AG04450 (cell line): ENCODE measurements at regions of chr9 and their contacts with region 1.

Region 1: DNA sequence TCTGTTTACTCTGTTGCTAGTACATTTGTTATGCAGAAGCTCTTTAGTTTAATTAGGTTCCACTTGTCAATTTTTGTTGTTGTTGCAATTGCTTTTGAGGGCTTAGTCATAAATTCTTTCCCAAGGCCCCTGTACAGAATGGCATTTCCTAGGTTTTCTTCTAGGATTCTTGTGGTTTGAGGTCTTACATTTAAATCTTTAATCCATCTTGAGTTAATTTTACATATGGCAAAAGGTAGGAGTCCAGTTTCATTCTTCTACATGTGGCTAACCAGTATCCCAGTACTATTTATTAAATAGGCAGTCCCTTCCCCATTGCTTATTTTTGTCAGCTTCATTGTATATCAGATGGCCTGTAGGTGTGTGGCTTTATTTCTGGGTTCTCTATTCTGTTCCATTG is 792.4 kb downstream of the PTPRD start:
- DNase-seq: no peak
- H3K4me3 ChIP-seq: no peak overlapping the region
- H3K27ac ChIP-seq: no peak overlapping the region
- H3K27me3 ChIP-seq: no peaks in the 10 kb centered on the region
- CTCF ChIP-seq: no peak

Region 2: GRCh38 chr9:9799287-9799686 is 21.1 kb before region 1 on chr9:
- CTCF ChIA-PET with region 1: interaction called, 10 read pairs
- POLR2A ChIA-PET with region 1: no interaction called
- DNase-seq: no peak
- H3K4me3 ChIP-seq: no peak overlapping the region
- H3K27ac ChIP-seq: no peak overlapping the region
- H3K27me3 ChIP-seq: no peaks in the 10 kb centered on the region
- CTCF ChIP-seq: no peak

Region 3: DNA sequence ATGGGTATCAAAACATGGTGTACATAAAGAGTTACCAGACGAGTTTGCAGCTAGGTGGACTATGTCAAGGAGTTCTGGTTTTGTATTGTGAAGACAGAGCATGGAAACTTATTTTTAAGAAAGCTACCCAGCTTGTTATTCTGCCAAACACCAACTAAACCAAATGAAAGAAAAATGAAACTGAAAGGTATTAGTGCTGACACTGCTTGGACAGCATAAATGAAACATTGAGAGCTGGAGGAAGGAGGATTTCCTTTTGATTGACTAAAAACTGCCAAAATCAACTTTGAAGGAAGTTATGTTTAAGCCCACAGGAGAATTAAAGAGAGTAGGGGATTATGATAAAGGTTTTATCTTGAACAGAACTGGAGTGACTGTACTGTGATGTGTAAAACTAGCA is 26.1 kb after region 1 on chr9:
- CTCF ChIA-PET with region 1: no interaction called
- POLR2A ChIA-PET with region 1: no interaction called
- DNase-seq: no peak
- H3K4me3 ChIP-seq: no peak overlapping the region
- H3K27ac ChIP-seq: no peak overlapping the region
- H3K27me3 ChIP-seq: no peaks in the 10 kb centered on the region
- CTCF ChIP-seq: no peak